ENCODE measurements at regions of chr6 and their contacts with region 1.

Region 1: GRCh38 chr6:50128420-50129005 is 78.8 kb upstream of the DEFB112 start:
- DNase-seq: no peak
- ATAC-seq: no peak

Region 2: DNA sequence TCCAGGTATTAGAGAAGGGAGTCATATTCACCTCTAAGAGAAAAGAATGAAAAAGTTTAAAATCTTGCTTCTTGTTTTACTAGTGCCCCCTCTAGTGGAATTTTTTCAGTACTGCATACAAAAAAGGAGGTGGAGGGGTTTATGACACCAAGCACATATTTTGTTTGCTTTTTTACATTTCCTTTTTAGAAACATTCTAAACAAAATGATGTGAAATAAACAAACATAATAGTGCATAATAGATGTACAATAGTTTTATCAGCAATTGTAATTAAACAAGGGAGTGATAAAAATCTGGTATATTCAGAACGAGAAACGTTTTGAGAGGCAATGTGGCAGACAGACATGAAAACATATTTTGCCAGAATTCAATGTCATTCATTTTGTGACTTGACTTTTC is 473.8 kb after region 1 on chr6:
- intact Hi-C with region 1: loop called in 1 of 2 experiments (anchors 5 kb)
- DNase-seq: no peak
- ATAC-seq: no peak

Measured in left cardiac atrium (tissue), 4 donors.